ENCODE measurements at regions of chr5 and their contacts with region 1.

Region 1: GRCh38 chr5:125326150-125326510 is 579.7 kb upstream of the ZNF608 start:
- DNase-seq: no peak
- ATAC-seq: peak; percentile 62; the same call in 1 of the 2 replicates
- H3K4me3 ChIP-seq: no peak overlapping the region
- H3K27ac ChIP-seq: no peak overlapping the region; the same call in 1 of the 2 replicates
- H3K4me1 ChIP-seq: peaks cover 12% of the 10 kb centered on the region; the same call in 1 of the 2 replicates
- H3K27me3 ChIP-seq: no peaks in the 10 kb centered on the region
- CTCF ChIP-seq: no peak

Region 2: DNA sequence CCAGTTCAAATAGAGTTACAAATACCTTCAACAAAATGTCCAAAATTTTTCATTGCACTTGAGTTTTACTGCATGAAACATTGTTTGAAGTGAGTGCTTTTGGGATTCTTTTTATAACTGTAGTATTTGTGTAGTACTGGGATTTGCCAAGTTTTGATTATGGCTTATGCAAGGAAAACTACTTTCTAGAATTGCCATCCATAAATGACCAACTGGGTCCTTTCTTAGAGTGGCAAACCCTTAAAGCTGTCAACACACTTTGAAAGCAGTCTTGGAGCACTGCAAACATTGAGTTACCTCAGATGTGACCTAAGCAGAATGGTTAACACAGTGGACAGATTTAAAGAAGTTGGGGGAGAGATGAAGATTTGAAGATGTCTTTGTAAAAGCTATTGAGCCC is 200.1 kb before region 1 on chr5:
- CTCF ChIA-PET with region 1: interaction called, 13 read pairs
- POLR2A ChIA-PET with region 1: no interaction called
- in situ Hi-C with region 1: no loop called
- intact Hi-C with region 1: no loop called
- DNase-seq: no peak
- ATAC-seq: no peak
- H3K4me3 ChIP-seq: no peak overlapping the region
- H3K27ac ChIP-seq: no peak overlapping the region
- H3K4me1 ChIP-seq: no peaks in the 10 kb centered on the region; the same call in 1 of the 2 replicates
- H3K27me3 ChIP-seq: no peaks in the 10 kb centered on the region
- CTCF ChIP-seq: no peak

Region 3: DNA sequence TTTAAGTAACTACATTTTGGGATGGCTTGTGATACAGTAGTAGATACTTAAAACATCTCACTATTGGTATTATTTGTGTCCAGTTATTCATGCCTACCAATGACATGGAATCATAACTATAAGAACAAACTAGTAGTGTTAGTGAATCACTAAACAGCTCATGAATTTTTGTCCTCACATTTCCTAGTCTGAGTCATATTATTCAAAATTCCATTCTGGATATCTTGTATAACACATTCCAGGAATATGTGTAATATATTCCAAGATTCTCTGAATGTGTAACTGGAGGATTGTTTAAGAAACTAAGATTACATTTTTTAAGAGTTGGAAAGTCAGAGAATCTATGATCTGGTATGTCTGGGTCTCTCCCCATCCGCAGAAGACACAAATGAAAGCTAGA is 14.4 kb before region 1 on chr5:
- CTCF ChIA-PET with region 1: no interaction called
- POLR2A ChIA-PET with region 1: no interaction called
- in situ Hi-C with region 1: no loop called
- intact Hi-C with region 1: no loop called
- DNase-seq: peak; percentile 27
- ATAC-seq: no peak
- H3K4me3 ChIP-seq: no peak overlapping the region
- H3K27ac ChIP-seq: peak overlapping the region; percentile 26; the same call in 1 of the 2 replicates
- H3K4me1 ChIP-seq: peaks cover 7% of the 10 kb centered on the region; the same call in 1 of the 2 replicates
- H3K27me3 ChIP-seq: no peaks in the 10 kb centered on the region
- CTCF ChIP-seq: no peak

Measured in Panc1 (cell line).